ENCODE measurements at regions of chr9 and their contacts with region 1.

Region 1: GRCh38 chr9:16618524-16618923 is 251.9 kb downstream of the BNC2 start:
- DNase-seq: no peak
- ATAC-seq: no peak

Region 2: GRCh38 chr9:16591092-16591491 is 27.4 kb before region 1 on chr9:
- intact Hi-C with region 1: loop called (anchors 1 kb)
- DNase-seq: no peak
- ATAC-seq: no peak

Region 3: GRCh38 chr9:17063535-17064135 is 445.1 kb after region 1 on chr9:
- intact Hi-C with region 1: no loop called
- DNase-seq: no peak
- ATAC-seq: peak; percentile 86

Measured in sciatic nerve (tissue), 2 donors.